OCI-LY7 (cell line): ENCODE measurements at regions of chr1 and their contacts with region 1.

Region 1: DNA sequence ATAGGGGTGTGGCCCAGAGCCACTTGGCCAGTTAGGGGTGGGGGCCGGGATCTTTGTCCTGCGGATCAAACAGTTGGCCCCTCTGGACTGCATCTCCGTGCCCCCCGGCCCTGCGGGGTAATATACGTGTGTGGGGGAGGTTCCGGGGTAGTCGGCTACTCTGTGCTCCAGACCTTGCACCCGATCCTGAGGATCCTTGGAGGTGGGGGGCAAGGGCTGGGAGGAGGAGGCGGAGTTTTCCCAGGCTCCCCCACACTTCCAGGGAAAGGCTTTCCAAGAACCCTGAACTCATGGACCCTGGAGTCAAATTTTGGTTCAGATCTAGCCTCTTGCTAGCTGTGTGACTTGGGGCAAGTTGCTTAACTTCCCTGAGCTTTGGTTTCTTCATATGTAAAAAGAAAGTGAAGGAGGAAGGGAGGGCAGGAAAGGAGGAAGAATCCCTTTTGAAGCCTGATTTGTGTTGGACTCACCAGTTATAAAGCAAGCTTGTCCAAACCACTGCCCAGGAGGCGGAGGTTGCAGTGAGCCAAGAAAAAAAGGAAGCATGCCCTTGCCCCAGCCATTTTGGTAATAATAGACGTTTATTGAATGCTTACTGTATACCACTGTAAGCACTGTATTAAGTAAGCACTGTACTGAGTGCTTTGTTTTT is 686 bp downstream of the MIIP start:
- DNase-seq: no peak
- H3K4me3 ChIP-seq: peak overlapping the region; percentile 77
- H3K27ac ChIP-seq: peak overlapping the region; percentile 11
- H3K4me1 ChIP-seq: peaks cover 7% of the 10 kb centered on the region
- CTCF ChIP-seq: no peak

Region 2: GRCh38 chr1:12009318-12009947 is 10.6 kb before region 1 on chr1:
- CTCF ChIA-PET with region 1: no interaction called
- POLR2A ChIA-PET with region 1: interaction called, 12 read pairs
- intact Hi-C with region 1: no loop called
- DNase-seq: no peak
- H3K4me3 ChIP-seq: no peak overlapping the region
- H3K27ac ChIP-seq: no peak overlapping the region
- H3K4me1 ChIP-seq: no peaks in the 10 kb centered on the region
- CTCF ChIP-seq: no peak